ENCODE measurements at regions of chr11 and their contacts with region 1.

Region 1: GRCh38 chr11:112588252-112588694 is 327.6 kb upstream of the PLET1 start:
- DNase-seq: peak; percentile 21
- H3K4me3 ChIP-seq: no peak overlapping the region
- H3K27me3 ChIP-seq: peaks cover 1% of the 10 kb centered on the region; the same call in 1 of the 2 replicates
- CTCF ChIP-seq: peak; percentile 68

Region 2: GRCh38 chr11:112548641-112549040 is 39.6 kb before region 1 on chr11:
- CTCF ChIA-PET with region 1: no interaction called
- POLR2A ChIA-PET with region 1: no interaction called
- DNase-seq: no peak
- H3K4me3 ChIP-seq: no peak overlapping the region
- H3K27me3 ChIP-seq: no peaks in the 10 kb centered on the region; the same call in 1 of the 2 replicates
- CTCF ChIP-seq: no peak

Region 3: DNA sequence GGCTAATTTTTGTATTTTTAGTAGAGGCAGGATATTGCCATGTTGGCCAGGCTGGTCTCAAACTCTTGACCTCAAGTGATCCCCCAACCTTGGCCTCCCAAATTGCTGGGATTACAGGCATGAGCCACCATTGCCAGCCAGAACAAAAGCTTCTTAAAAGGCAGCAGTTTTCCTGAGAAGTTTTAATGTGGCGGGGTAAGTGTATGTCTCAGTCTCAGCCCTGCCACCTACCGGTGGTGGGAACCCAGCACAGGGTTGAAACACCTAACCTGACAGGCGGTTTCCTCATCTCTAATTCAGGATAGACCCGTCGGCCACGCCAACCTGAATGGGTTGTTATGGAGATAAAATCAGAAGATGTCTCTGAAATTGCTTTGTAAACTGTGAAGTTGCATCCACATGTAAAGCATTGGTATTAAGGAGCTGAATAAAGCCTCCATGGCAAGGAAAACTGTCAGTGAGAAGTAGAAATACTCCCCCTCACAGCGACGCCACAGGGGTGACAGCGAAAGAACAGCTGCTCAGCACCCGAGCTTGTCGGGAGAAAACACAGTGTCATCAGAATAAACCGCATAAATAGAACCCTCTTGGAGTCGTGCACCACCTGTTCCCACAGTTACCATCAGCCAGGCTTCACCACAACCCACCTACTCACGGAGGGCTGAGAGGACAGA is 207.0 kb after region 1 on chr11:
- CTCF ChIA-PET with region 1: interaction called, 21 read pairs
- POLR2A ChIA-PET with region 1: no interaction called
- DNase-seq: no peak
- H3K4me3 ChIP-seq: no peak overlapping the region
- H3K27me3 ChIP-seq: no peaks in the 10 kb centered on the region
- CTCF ChIP-seq: peak; percentile 65

Region 4: GRCh38 chr11:113113801-113114706 is 525.8 kb after region 1 on chr11:
- CTCF ChIA-PET with region 1: interaction called, 31 read pairs
- POLR2A ChIA-PET with region 1: no interaction called
- DNase-seq: no peak
- H3K4me3 ChIP-seq: no peak overlapping the region
- H3K27me3 ChIP-seq: no peaks in the 10 kb centered on the region
- CTCF ChIP-seq: peak; percentile 75

Region 5: GRCh38 chr11:113289431-113290187 is 701.3 kb after region 1 on chr11:
- CTCF ChIA-PET with region 1: interaction called, 105 read pairs
- POLR2A ChIA-PET with region 1: no interaction called
- DNase-seq: no peak
- H3K4me3 ChIP-seq: no peak overlapping the region
- H3K27me3 ChIP-seq: peaks cover 8% of the 10 kb centered on the region
- CTCF ChIP-seq: peak; percentile 97

Measured in BJ (cell line).